SK-N-SH (cell line): ENCODE measurements at regions of chr5 and their contacts with region 1.

Region 1: DNA sequence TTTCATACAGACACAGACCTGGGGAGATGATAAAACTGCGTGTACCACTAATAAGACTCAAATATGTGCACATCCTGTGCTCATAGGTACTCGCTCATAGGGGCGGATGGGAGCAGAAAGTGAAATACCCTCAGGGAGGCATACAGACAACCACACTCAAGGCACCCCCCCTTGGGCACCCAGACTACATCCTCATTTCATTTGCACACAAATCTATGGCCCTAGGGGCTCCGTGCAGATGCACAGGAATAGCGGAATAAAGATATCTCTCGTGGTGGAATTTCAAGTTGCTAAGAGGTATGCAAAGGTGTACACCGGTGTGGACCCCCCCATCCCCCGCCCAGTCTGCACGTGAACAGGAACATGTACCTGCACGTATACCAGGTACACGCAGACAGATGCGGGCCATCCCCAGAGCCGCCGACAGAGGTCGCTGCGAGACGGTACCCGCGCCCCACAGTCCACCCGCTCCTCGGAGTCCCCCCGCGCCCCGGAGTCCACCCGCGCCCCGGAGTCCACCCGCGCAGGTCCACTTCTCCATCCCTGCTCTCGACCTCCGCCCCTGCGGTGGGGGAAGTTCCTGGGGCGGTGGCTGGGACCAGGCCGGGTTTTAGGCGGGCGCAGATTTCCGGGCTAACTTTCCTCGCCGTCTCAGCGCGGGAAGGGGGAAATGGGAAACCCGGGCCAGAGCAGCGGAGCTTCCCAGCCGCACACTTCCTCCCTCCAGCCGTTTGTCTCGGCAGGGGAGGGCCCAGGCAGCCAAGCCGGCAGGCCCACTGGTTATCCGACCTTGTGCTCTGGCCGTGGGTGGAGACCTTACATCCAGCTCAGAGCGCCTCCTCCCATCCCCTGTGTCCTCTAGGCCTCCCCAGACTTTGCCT is 1.0 kb upstream of the IL12B start:
- DNase-seq: peak; percentile 86
- H3K4me3 ChIP-seq: peak overlapping the region; percentile 54 to 63
- H3K27ac ChIP-seq: no peak overlapping the region
- H3K4me1 ChIP-seq: peaks cover 0 to 7% of the 10 kb centered on the region in 2 experiments; a peak in 1 of 4 replicates
- H3K27me3 ChIP-seq: no peaks in the 10 kb centered on the region
- CTCF ChIP-seq: peak; percentile 83
- EP300 ChIP-seq: no peak
- RAD21 ChIP-seq: peak; percentile 44

Region 2: GRCh38 chr5:159310511-159310910 is 20.8 kb before region 1 on chr5:
- CTCF ChIA-PET with region 1: interaction called, 41 read pairs
- POLR2A ChIA-PET with region 1: no interaction called
- DNase-seq: no peak
- H3K4me3 ChIP-seq: no peak overlapping the region
- H3K27ac ChIP-seq: no peak overlapping the region
- H3K4me1 ChIP-seq: no peaks in the 10 kb centered on the region; a peak in 1 of 4 replicates
- H3K27me3 ChIP-seq: no peaks in the 10 kb centered on the region; the same call in 1 of the 2 replicates
- CTCF ChIP-seq: no peak
- EP300 ChIP-seq: no peak
- RAD21 ChIP-seq: no peak

Region 3: GRCh38 chr5:159341914-159342313 is 10.6 kb after region 1 on chr5:
- CTCF ChIA-PET with region 1: interaction called, 19 read pairs
- POLR2A ChIA-PET with region 1: no interaction called
- DNase-seq: peak; percentile 66
- H3K4me3 ChIP-seq: no peak overlapping the region
- H3K27ac ChIP-seq: peak overlapping the region; percentile 26 to 62; a peak in 2 of 4 replicates
- H3K4me1 ChIP-seq: peaks cover 3 to 9% of the 10 kb centered on the region in 2 experiments; a peak in 2 of 4 replicates
- H3K27me3 ChIP-seq: no peaks in the 10 kb centered on the region
- CTCF ChIP-seq: no peak
- EP300 ChIP-seq: peak; percentile 52 to 88; a peak in 3 of 4 replicates
- RAD21 ChIP-seq: no peak